Panc1 (cell line): ENCODE measurements at regions of chr1 and their contacts with region 1.

Region 1: GRCh38 chr1:37704966-37705365 is 12.7 kb downstream of the CDCA8 start:
- DNase-seq: no peak
- ATAC-seq: no peak
- H3K4me3 ChIP-seq: no peak overlapping the region
- H3K27ac ChIP-seq: no peak overlapping the region
- H3K4me1 ChIP-seq: no peaks in the 10 kb centered on the region
- H3K27me3 ChIP-seq: no peaks in the 10 kb centered on the region
- CTCF ChIP-seq: no peak

Region 2: DNA sequence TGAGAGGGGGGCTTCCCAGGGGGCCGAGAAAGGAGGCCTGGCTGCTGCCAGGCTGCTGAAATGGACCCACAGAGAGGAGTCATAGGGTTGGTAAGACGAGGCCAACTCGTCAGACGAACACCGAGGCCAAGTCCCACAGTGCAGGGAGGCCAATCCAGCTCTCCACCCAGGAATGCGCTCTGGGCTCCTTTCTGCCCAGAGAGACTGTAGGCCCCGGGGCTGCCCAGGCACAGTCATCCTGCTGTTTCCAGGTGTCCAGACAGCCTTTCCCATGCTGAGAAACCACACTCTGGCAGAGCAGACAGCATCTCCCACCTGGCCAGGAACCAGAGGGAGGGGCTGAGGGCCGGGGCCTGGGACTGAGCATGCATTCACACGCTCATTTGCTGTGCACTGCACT is 43.6 kb before region 1 on chr1:
- CTCF ChIA-PET with region 1: no interaction called
- POLR2A ChIA-PET with region 1: no interaction called
- in situ Hi-C with region 1: no loop called
- intact Hi-C with region 1: no loop called
- DNase-seq: no peak
- ATAC-seq: peak; percentile 54; the same call in 1 of the 2 replicates
- H3K4me3 ChIP-seq: no peak overlapping the region
- H3K27ac ChIP-seq: no peak overlapping the region
- H3K4me1 ChIP-seq: peaks cover 2% of the 10 kb centered on the region; the same call in 1 of the 2 replicates
- H3K27me3 ChIP-seq: no peaks in the 10 kb centered on the region
- CTCF ChIP-seq: no peak

Region 3: DNA sequence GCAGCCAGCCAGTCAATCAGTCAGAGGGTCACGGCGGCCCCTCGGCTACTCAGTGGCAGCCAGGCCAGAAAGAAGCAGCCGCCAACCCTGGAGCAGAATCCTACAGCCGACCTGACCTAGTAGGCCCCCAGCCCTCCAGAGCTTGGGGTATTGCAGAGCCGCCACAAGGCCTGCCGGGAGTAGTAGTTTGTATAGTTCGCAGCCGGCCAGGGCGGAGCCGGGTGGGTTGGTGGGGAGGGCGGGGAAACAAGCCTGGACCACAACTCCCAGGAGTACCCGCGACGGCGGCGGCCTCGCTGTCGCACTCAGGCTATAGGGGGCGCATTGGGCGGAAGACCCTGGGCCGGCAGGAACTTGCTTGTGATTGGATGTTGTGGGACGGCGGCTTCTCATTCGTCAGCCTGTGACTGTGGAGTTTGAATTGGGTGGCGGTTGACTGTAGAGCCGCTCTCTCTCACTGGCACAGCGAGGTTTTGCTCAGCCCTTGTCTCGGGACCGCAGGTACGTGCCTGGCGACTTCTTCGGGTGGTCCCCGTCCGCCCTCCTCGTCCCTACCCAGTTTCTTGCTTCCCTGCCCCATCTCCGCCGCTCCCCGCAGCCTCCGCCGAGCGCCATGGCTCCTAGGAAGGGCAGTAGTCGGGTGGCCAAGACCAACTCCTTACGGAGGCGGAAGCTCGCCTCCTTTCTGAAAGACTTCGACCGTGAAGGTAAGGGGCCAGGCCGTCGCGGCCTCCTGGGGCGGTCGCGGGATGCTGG is 12.7 kb before region 1 on chr1 and contains the start of gene CDCA8:
- CTCF ChIA-PET with region 1: interaction called, 10 read pairs
- POLR2A ChIA-PET with region 1: interaction called, 6 read pairs
- in situ Hi-C with region 1: no loop called
- intact Hi-C with region 1: no loop called
- DNase-seq: peak; percentile 91
- ATAC-seq: peak; percentile 93
- H3K4me3 ChIP-seq: peak within 1 kb of the TSS; percentile 90 to 100
- H3K27ac ChIP-seq: peak within 1 kb of the TSS; percentile 92
- H3K4me1 ChIP-seq: peaks cover 19% of the 10 kb centered on the region
- H3K27me3 ChIP-seq: no peaks in the 10 kb centered on the region
- CTCF ChIP-seq: peak; percentile 81
- total RNA-seq, gene CDCA8: 56.5 TPM

Region 4: DNA sequence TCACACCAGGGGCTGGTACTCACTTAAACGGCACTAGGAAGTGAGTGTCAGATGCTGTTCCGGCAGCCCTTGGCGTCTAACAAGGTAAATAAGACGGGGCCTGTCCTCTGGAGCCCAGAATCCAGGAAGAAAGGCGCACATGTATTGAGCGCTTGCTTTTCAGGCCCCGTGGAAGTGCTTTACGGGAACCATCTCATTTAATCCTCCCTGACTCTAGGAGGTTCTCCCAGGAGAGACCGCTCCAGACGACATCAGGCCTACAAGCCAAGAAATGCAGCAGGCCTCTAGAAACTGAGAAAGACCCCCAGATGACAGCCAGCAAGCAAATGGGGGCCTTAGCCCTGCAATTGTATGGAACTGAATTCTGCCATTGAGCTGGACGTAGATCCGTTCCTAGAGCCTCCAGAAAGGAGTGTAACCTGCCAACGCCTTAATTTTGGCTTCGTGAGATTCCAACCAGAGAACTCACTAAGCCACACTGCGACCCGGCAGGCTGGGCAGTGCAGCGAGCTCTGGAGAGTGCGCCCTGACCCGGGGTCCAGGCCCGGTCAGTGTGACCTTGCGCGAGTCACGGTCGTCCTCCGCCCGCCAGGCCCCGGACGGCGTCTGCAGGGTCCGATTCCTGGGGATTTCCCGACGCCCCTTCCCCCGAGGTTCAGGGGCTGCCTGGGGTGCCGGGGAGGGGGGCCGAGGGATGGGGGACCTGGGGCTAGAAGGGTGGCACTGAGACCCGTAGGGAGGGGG is 88.1 kb after region 1 on chr1:
- CTCF ChIA-PET with region 1: no interaction called
- POLR2A ChIA-PET with region 1: interaction called, 11 read pairs
- in situ Hi-C with region 1: no loop called
- intact Hi-C with region 1: no loop called
- DNase-seq: no peak
- ATAC-seq: no peak
- H3K4me3 ChIP-seq: peak overlapping the region; percentile 54 to 60; a peak in 2 of 4 replicates
- H3K27ac ChIP-seq: no peak overlapping the region
- H3K4me1 ChIP-seq: 0 out of 2 replicates have a peak, but pooled peaks cover 2% of the 10 kb centered on the region
- H3K27me3 ChIP-seq: peaks cover 3% of the 10 kb centered on the region; the same call in 1 of the 2 replicates
- CTCF ChIP-seq: no peak